Psoas muscle (tissue), 8 donors: ENCODE measurements at regions of chr17 and their contacts with region 1.

Region 1: DNA sequence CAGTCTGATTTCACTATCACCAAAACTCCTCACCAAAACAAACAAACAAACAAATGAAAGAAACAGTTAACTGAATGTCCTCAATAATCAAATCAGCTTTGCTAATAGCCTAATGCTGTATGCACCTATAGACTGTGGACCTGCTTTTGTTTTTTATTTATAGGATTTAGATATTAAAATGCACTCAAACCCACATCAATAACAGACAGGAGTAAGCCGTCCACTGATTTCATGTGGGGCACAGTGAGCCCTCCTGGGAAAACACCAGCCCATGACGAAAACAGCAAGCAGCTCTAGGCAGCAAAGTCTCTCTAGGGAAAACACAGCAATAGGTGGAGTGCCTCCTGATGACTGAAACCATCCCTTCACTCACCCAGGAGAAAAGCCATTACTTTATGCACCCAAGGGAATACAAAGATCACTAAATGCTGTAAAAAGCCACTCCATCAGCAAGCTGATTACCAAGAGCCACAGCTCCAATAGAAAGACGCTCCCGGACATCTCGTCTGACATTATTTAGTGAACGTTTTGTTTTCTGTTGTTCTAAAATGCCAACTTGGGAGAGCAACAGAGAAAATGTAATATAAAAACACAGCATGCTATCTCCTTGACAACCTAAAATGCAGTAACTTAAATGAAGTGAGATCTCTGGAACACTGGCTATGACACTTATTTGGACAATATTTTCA is 47.8 kb downstream of the ANKFY1 start:
- DNase-seq: no peak
- ATAC-seq: peak in 2 of 4 donors; percentile 19 to 43
- H3K4me3 ChIP-seq: peak overlapping the region; percentile 47
- H3K27ac ChIP-seq: peak overlapping the region; percentile 89
- H3K4me1 ChIP-seq: peaks cover 30% of the 10 kb centered on the region
- H3K27me3 ChIP-seq: no peaks in the 10 kb centered on the region
- CTCF ChIP-seq: no peak

Region 2: DNA sequence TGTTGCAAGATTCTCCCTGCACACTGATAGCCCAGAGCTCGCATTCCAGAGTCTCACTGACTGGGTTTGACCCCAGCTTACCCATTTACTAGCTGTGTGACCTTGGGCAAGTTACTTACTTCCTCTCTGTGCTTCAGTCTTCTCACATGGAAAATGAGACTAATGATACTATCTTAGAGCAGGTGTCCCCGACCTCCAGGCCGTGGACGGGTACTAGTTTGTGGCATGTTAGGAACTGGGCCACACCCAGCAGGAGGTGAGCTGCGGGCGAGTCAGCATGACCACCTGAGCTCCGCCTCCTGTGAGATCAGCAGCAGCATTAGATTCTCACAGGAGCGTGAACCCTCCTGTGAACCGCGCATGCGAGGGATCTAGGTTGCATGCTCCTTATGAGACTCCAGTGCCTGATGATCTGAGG is 32.0 kb after region 1 on chr17:
- intact Hi-C with region 1: loop called in 1 of 2 experiments (anchors 1 kb)
- DNase-seq: no peak
- ATAC-seq: peak; percentile 62 to 82 (median 76)
- H3K4me3 ChIP-seq: peak overlapping the region; percentile 26
- H3K27ac ChIP-seq: peak overlapping the region; percentile 72
- H3K4me1 ChIP-seq: peaks cover 51% of the 10 kb centered on the region
- H3K27me3 ChIP-seq: no peaks in the 10 kb centered on the region
- CTCF ChIP-seq: no peak

Region 3: DNA sequence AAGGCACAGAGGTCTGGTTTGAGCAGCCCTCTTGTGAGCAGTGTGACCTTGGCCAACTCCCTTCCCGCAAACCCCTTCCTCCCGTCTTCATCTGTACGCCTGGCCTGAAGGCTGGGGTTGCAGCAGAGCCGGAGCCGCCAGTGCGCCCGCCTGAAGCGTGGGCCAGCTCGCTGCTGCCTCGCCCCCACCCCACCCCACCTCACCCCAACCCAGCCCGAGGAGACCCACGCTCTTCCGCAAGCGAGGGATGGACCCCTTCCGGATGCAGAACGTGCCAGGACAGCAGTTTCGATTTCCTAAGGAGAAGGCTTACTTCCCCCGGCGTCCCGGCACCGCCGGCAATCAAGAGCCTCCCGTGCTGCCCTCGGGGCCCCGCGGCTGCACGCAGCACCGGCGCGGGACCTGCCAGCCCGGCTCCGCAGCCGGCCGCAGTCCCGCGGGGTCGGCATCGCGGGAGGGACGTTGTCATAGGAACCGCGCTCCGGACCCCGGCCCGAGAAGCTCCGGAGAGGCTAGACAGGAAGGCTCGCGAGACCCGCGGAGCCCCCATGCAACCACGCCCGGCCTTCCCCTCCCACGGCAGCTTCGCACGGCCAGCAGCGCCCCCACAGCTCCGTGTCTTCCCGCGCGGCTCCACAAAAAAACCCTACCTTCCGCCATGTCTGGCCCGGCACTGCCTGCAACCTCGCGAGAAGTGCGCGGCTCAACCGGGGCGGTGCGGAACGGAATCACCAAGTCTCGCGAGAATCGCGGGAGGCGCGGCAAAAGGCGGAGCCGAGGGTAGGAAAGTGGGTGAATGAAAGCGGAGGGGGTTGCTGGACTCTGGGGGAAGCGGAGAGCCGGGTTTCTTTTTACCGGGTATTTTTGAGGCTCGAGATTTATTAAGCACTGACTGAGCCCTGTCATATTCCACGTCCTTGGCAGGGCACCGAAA is 47.5 kb after region 1 on chr17 and contains the start of gene ANKFY1:
- intact Hi-C with region 1: loop called (anchors 5 kb)
- DNase-seq: peak; percentile 97 to 99
- ATAC-seq: peak; percentile 94 to 97 (median 96)
- H3K4me3 ChIP-seq: peak within 1 kb of the TSS; percentile 84
- H3K27ac ChIP-seq: peak within 1 kb of the TSS; percentile 85
- H3K4me1 ChIP-seq: peaks cover 11% of the 10 kb centered on the region
- H3K27me3 ChIP-seq: no peaks in the 10 kb centered on the region
- CTCF ChIP-seq: peak; percentile 8
- total RNA-seq, gene ANKFY1: 12.8 to 18.8 (median 16.5) TPM

Region 4: GRCh38 chr17:4287710-4288109 is 71.7 kb after region 1 on chr17:
- intact Hi-C with region 1: no loop called
- DNase-seq: no peak
- ATAC-seq: no peak
- H3K4me3 ChIP-seq: no peak overlapping the region
- H3K27ac ChIP-seq: no peak overlapping the region
- H3K4me1 ChIP-seq: no peaks in the 10 kb centered on the region
- H3K27me3 ChIP-seq: no peaks in the 10 kb centered on the region
- CTCF ChIP-seq: no peak

Region 5: GRCh38 chr17:4304417-4305027 is 88.5 kb after region 1 on chr17:
- intact Hi-C with region 1: loop called (anchors 2 to 5 kb)
- DNase-seq: no peak
- ATAC-seq: peak; percentile 63 to 77 (median 69)
- H3K4me3 ChIP-seq: no peak overlapping the region
- H3K27ac ChIP-seq: peak overlapping the region; percentile 58
- H3K4me1 ChIP-seq: peaks cover 23% of the 10 kb centered on the region
- H3K27me3 ChIP-seq: no peaks in the 10 kb centered on the region
- CTCF ChIP-seq: peak; percentile 69

Region 6: GRCh38 chr17:4366327-4367063 is 150.5 kb after region 1 on chr17 and contains the start of gene UBE2G1:
- intact Hi-C with region 1: loop called in 1 of 2 experiments (anchors 5 kb)
- DNase-seq: peak; percentile 99
- ATAC-seq: peak; percentile 82 to 90 (median 84)
- H3K4me3 ChIP-seq: peak within 1 kb of the TSS; percentile 100
- H3K27ac ChIP-seq: peak within 1 kb of the TSS; percentile 99
- H3K4me1 ChIP-seq: peaks cover 17% of the 10 kb centered on the region
- H3K27me3 ChIP-seq: no peaks in the 10 kb centered on the region
- CTCF ChIP-seq: peak; percentile 26
- total RNA-seq, gene UBE2G1: 152 to 239 (median 175) TPM

Region 7: GRCh38 chr17:4412933-4413831 is 197.2 kb after region 1 on chr17:
- intact Hi-C with region 1: loop called (anchors 1 to 5 kb)
- DNase-seq: peak; percentile 93 to 97
- ATAC-seq: peak; percentile 95 to 98 (median 98)
- H3K4me3 ChIP-seq: no peak overlapping the region
- H3K27ac ChIP-seq: no peak overlapping the region
- H3K4me1 ChIP-seq: peaks cover 5% of the 10 kb centered on the region
- H3K27me3 ChIP-seq: no peaks in the 10 kb centered on the region
- CTCF ChIP-seq: peak; percentile 94